ENCODE measurements at regions of chr10 and their contacts with region 1.

Region 1: GRCh38 chr10:62804356-62805230 is at the start of gene ADO:
- DNase-seq: peak; percentile 51
- H3K4me3 ChIP-seq: peak within 1 kb of the TSS; percentile 95
- H3K27ac ChIP-seq: peak within 1 kb of the TSS; percentile 93
- H3K27me3 ChIP-seq: no peaks in the 10 kb centered on the region
- CTCF ChIP-seq: no peak
- polyA plus RNA-seq, gene ADO: 13.3 and 17.8 TPM in 2 replicates

Region 2: GRCh38 chr10:62816331-62817120 is 11.9 kb after region 1 on chr10 and contains the start of gene EGR2:
- CTCF ChIA-PET with region 1: interaction called, 23 read pairs
- POLR2A ChIA-PET with region 1: interaction called, 12 read pairs
- DNase-seq: peak; percentile 80
- H3K4me3 ChIP-seq: peak within 1 kb of the TSS; percentile 68
- H3K27ac ChIP-seq: peak within 1 kb of the TSS; percentile 39
- H3K27me3 ChIP-seq: peaks cover 48% of the 10 kb centered on the region
- CTCF ChIP-seq: no peak
- polyA plus RNA-seq, gene EGR2: 0.57 and 0.61 TPM in 2 replicates

Measured in AG04450 (cell line).